CD14-positive monocyte (primary cell): ENCODE measurements at regions of chr3 and their contacts with region 1.

Region 1: DNA sequence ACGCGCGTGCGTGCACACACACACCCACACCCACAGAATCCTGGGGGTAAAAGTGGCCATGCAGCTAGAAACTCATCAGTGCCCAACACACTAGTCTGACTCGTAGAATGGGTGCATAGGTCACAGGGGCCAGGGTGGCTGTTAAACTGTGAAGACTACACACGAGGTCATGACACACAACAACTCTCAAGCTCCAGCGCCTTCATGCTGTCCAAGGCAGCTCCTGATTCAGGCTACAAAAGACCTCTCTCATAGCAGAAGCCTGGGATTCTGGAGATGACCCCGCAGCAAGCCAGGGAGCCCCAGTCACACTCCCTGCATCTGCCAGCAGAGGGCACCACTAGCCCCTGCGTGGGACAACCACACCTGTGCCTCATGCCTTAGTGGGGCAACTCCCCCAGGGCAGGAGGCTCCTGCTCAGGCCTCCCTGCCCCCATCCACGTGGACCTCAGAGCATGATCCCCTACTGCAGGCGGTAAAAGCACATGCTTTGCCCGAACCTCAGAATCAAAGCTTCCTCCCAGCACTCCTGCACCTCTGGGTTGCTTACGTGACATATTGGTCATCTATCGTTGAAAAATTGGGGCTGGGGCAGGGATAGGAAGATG is 93.1 kb downstream of the LRIG1 start:
- DNase-seq: peak; percentile 8 to 40 (median 20)
- H3K4me3 ChIP-seq: no peak overlapping the region
- H3K4me3 Mint-ChIP-seq: no peak overlapping the region
- H3K27ac ChIP-seq: no peak overlapping the region
- H3K27ac Mint-ChIP-seq: no peak overlapping the region
- H3K4me1 ChIP-seq: no peaks in the 10 kb centered on the region
- H3K4me1 Mint-ChIP-seq: no peaks in the 10 kb centered on the region
- H3K27me3 ChIP-seq: no peaks in the 10 kb centered on the region
- H3K27me3 Mint-ChIP-seq: peaks cover 0 to 3% (median 0%) of the 10 kb centered on the region in 3 donors
- CTCF ChIP-seq: peak; percentile 81

Region 2: GRCh38 chr3:66500576-66501482 is 93.1 kb after region 1 on chr3 and contains the start of gene LRIG1:
- intact Hi-C with region 1: loop called in 1 of 2 experiments (anchors 5 kb)
- DNase-seq: peak; percentile 88 to 89 (median 88)
- H3K4me3 ChIP-seq: peak within 1 kb of the TSS; percentile 61 to 85 (median 82)
- H3K4me3 Mint-ChIP-seq: peak within 1 kb of the TSS; percentile 95 to 98
- H3K27ac ChIP-seq: peak within 1 kb of the TSS in 1 of 2 donors; percentile 26
- H3K27ac Mint-ChIP-seq: peak within 1 kb of the TSS in 4 of 7 donors; percentile 20 to 84 (median 69)
- H3K4me1 ChIP-seq: peaks cover 19 to 22% of the 10 kb centered on the region in 2 donors
- H3K4me1 Mint-ChIP-seq: peaks cover 26% of the 10 kb centered on the region
- H3K27me3 ChIP-seq: peaks cover 15 to 37% of the 10 kb centered on the region in 2 donors
- H3K27me3 Mint-ChIP-seq: peaks cover 36 to 42% (median 38%) of the 10 kb centered on the region in 3 donors
- CTCF ChIP-seq: peak; percentile 33
- polyA plus RNA-seq, gene LRIG1: 0.82 to 1.9 (median 1.0) TPM

Region 3: DNA sequence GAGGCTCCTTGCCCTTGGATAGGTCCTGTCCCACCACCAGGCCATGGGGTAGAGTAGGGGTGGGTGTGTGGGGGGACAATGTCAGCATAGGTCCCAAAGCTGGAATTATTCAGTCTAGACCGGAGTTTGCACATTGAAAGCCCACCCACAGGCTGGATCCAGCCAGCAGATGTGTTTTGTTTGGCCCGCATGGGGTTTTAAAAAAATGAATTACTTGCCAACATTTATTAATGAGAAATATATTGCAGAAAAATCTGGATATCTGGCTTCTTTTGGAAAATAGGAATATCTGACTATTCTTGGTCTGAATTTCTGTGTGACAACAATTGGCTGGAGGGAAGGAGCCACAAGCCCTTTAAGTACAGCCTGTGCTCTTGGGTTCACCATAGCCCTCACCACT is 110.4 kb after region 1 on chr3:
- intact Hi-C with region 1: no loop called
- DNase-seq: no peak
- H3K4me3 ChIP-seq: no peak overlapping the region
- H3K4me3 Mint-ChIP-seq: no peak overlapping the region
- H3K27ac ChIP-seq: no peak overlapping the region
- H3K27ac Mint-ChIP-seq: peak overlapping the region in 1 of 7 donors; percentile 50
- H3K4me1 ChIP-seq: no peaks in the 10 kb centered on the region
- H3K4me1 Mint-ChIP-seq: no peaks in the 10 kb centered on the region
- H3K27me3 ChIP-seq: no peaks in the 10 kb centered on the region
- H3K27me3 Mint-ChIP-seq: peaks cover 0 to 8% (median 4%) of the 10 kb centered on the region in 3 donors
- CTCF ChIP-seq: no peak

Region 4: GRCh38 chr3:66582721-66583423 is 175.2 kb after region 1 on chr3:
- intact Hi-C with region 1: no loop called
- DNase-seq: no peak
- H3K4me3 ChIP-seq: no peak overlapping the region
- H3K4me3 Mint-ChIP-seq: no peak overlapping the region
- H3K27ac ChIP-seq: no peak overlapping the region
- H3K27ac Mint-ChIP-seq: no peak overlapping the region
- H3K4me1 ChIP-seq: no peaks in the 10 kb centered on the region
- H3K4me1 Mint-ChIP-seq: peaks cover 5% of the 10 kb centered on the region
- H3K27me3 ChIP-seq: no peaks in the 10 kb centered on the region
- H3K27me3 Mint-ChIP-seq: peaks cover 0 to 2% (median 0%) of the 10 kb centered on the region in 3 donors
- CTCF ChIP-seq: no peak

Region 5: DNA sequence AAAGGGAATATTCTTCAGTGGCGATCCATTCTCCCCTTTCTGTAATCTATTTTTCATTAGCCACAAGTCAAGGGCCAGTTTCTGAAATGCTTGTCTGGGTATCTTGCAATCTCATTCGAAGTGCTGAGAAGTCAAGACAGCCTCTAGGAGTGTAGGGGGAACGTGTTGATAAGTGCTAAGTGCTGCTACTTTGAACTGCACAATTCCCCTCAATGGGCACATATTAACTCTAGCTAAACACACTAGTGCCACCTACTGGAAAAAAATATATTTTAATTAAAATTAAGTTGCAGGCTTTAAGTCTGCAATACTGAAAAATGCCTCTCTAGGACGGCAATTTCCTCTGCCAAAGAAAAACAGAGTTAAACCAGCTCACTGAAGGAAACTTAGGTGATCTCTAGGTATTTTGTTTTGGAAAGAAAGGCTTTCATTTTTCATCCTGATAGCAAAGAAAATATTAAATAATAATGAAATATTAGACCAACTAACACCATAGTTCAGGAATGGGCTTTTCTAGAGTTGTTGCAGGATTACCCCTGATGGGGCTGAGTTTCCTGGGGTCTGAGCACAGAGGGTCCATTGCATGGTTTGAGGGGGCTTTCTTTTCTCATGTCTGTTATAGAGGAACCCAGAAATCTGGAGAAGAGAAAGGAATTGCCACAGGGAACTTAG is 408.5 kb after region 1 on chr3:
- intact Hi-C with region 1: loop called (anchors 5 kb)
- DNase-seq: peak; percentile 3 to 44 (median 25)
- H3K4me3 ChIP-seq: no peak overlapping the region
- H3K4me3 Mint-ChIP-seq: no peak overlapping the region
- H3K27ac ChIP-seq: no peak overlapping the region
- H3K27ac Mint-ChIP-seq: no peak overlapping the region
- H3K4me1 ChIP-seq: no peaks in the 10 kb centered on the region
- H3K4me1 Mint-ChIP-seq: no peaks in the 10 kb centered on the region
- H3K27me3 ChIP-seq: no peaks in the 10 kb centered on the region
- H3K27me3 Mint-ChIP-seq: peaks cover 2 to 7% (median 3%) of the 10 kb centered on the region in 3 donors
- CTCF ChIP-seq: peak; percentile 76